Activated CD4-positive, alpha-beta T cell treated with anti-CD3 and anti-CD28 coated beads, Interleukin-2, amount 10 ng/mL, durations not matched to agents 7 days and 5 days (primary cell): ENCODE measurements at regions of chr2 and their contacts with region 1.

Region 1: DNA sequence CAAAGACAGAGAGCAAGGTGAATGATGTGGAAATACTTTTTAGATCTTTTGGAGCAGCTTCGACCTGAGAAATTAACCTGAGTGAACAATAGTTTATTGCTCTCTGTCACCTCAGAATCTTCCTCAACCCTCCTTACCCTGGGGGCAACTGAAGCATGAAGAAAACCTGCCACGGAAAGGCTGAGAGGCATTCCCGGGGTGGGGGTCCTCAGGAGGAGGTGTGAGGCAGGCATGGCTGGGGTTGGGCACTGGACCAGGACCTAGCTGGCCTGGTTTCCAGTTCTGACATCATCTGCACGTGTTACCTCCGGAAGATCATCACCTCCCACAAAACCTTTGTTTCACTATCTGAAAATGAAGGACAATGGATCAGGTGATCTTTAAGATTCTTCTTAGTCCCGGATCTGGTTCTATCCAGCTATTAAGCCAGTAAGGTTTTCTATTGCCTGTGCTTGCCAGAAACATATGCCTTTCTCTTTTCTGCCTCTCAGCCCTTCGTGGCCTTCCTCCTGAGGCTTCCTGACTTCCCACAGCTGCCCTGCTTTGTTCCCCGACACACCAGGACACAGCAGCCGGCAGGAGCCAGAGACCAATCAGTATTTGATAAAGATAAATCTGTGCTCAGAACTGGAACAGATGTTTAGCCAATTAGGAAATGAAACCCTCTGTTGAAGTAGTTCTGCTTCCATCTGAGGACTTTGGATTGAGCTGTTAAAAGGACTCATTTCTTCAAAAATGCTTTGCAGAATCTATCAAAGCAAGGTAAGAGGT is 232.5 kb downstream of the TDRD15 start:
- DNase-seq: no peak
- H3K4me3 Mint-ChIP-seq: no peak overlapping the region
- H3K27ac Mint-ChIP-seq: no peak overlapping the region
- H3K4me1 Mint-ChIP-seq: no peaks in the 10 kb centered on the region
- H3K27me3 Mint-ChIP-seq: no peaks in the 10 kb centered on the region

Region 2: DNA sequence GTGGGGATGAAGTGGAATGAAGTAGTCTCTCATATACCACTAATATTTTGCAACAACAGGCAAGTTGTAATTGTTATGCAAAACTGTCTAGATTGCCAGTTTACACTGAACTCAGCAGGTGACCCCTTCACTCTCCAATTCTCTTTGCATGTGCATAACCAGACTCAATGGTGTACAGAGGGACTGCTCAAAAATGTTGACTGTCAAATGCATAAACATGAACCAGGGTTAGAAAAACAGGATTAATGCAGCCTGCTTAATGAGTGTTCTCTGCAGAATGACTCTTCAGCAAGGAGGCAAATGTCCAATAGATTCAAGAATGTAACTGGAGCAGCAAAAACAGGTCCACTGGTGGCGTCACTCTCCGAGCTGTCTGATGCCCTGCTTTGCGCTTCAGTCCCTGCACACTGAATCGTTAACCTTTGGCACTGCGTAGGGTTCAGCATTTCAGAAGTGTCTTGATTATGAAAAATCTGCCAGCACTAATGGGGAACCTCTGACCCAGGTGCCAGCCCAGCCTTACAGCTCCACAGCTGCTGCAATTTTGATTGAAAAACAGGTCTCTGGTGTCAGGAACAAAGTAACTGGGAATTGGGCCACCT is 23.1 kb before region 1 on chr2:
- CTCF ChIA-PET with region 1: no interaction called
- POLR2A ChIA-PET with region 1: interaction called, 10 read pairs
- DNase-seq: no peak
- H3K4me3 Mint-ChIP-seq: no peak overlapping the region
- H3K27ac Mint-ChIP-seq: no peak overlapping the region
- H3K4me1 Mint-ChIP-seq: no peaks in the 10 kb centered on the region
- H3K27me3 Mint-ChIP-seq: no peaks in the 10 kb centered on the region

Region 3: DNA sequence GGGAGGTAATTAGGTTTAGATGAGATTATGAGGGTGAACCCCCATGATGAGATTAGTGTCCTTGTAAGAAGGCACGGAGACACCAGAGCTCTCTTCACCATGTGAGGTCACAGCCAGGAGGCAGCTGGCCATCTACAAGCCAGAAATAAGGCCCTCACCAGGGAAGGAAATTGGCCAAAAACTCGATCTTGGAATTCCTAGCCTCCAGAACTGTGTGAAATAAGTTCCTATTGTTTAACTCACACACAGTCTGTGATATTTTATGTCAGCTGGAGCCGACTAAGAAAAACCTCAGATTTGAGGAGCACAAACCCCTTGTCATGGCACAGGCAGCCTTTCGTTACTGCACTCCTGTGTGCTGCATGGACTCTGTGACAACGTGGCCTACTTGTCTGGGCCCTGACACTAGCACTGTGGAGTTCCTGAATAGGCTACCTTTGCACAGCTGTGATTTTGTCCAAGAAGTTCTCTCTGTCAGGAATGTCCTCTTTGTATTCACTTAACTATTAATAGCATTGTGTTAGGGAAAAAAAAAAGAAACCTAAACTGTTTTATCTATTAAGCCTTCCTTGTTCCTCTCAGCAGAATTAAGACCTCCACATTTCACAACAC is 87.3 kb after region 1 on chr2:
- CTCF ChIA-PET with region 1: no interaction called
- POLR2A ChIA-PET with region 1: no interaction called
- DNase-seq: no peak
- H3K4me3 Mint-ChIP-seq: no peak overlapping the region
- H3K27ac Mint-ChIP-seq: no peak overlapping the region
- H3K4me1 Mint-ChIP-seq: no peaks in the 10 kb centered on the region
- H3K27me3 Mint-ChIP-seq: no peaks in the 10 kb centered on the region

Region 4: GRCh38 chr2:21498016-21498415 is 141.7 kb after region 1 on chr2:
- CTCF ChIA-PET with region 1: no interaction called
- POLR2A ChIA-PET with region 1: no interaction called
- DNase-seq: no peak
- H3K4me3 Mint-ChIP-seq: no peak overlapping the region
- H3K27ac Mint-ChIP-seq: no peak overlapping the region
- H3K4me1 Mint-ChIP-seq: no peaks in the 10 kb centered on the region
- H3K27me3 Mint-ChIP-seq: no peaks in the 10 kb centered on the region